Right ventricle myocardium inferior (tissue), 1 donor: ENCODE measurements at regions of chr19 and their contacts with region 1.

Region 1: DNA sequence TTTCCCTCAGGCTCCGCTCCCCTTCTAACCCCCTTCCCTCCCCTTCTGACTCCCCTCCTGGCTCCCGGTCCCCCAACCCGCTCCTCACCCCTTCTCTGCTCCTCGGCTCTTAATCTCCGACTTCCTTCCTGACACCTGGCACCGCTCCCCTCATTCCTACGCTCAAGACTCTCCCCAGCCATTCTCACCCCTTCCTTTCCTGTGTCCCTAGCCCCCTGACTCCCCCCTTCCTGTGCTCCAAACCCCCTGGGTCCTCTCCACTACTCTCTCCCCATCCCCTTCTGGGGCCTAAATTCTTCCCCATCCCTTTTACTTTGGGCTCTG is 658 bp downstream of the CLPP start:
- DNase-seq: no peak
- ATAC-seq: no peak

Region 2: DNA sequence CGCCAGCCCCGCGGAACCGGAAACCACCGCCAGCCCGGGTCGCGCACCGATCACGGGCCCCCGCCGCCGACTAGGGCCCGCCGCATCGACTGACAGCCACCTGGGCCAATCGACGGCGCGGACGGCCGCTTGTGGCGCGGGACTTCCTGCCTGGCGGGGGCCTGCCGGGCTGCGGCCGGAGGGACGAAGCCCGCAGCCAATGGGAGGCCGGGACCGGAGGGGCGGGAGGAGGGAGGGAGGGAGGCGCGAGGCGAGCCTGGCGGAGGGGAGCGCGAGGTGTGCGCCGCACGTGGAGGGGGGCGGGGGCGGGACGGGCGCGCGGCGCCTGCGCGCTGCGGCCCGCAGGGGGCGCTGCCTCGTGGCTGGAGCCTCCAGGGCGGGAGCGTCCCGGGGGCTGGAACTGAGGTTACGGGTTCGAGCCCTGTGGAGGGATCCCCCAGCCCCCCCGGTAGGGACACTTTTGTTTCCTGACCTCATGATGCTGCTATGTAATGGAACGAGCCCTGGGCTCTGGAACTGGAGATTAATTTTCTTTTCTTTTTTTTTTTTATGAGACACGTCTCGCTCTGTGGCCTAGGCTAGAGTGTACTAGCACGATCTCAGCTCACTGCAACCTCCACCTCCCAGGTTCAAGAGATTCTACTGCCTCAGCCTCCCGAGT is 81.9 kb before region 1 on chr19 and contains the start of gene MLLT1:
- intact Hi-C with region 1: no loop called
- DNase-seq: peak; percentile 98
- ATAC-seq: peak; percentile 98
- total RNA-seq, gene MLLT1: 40.1 TPM

Region 3: GRCh38 chr19:6378041-6378440 is 16.1 kb after region 1 on chr19:
- intact Hi-C with region 1: no loop called
- DNase-seq: no peak
- ATAC-seq: no peak

Region 4: DNA sequence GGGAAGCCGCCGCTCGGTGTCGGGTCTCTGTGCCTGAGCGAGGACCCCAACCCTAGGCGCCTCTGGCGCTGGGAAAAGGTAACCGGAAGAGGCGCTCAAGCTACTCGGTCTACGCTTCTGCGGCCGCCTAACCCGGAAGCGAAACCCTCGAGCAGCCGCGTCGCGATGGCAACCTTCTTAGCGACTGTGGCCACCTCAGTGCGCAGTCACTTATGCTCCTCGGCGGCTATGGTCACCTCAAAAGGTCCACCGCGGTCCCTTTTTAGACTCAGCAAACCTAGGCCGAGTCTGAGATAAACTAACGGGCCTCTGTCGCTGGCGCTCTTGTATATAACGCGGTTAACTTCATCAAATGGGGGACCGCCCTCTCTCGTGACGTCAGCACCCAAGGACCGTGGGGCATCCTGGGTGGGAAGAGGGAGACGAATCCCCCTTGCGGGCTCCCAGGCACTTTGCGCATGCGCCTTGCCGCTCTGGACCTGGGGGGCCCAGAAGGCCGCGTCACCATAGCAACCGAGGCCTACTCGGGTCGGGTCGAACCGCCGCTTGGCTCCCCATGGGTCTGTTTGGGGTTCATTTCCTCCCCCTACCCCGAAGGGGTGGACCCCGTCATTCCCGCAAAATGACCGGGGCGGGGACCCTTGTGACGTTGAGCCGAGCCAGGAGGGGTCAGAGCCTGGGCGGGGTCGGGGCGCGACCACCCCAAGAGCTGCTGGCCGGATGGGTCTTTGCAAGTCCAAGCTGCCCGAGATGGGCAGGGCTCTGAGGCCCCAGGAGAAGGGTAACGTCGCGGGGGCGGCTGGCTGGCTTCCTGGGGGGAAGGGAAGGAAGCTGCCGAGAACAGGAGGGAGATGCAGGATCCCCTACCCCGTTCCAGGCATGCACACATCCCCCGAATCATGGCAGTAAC is 31.3 kb after region 1 on chr19 and contains the start of gene GTF2F1:
- intact Hi-C with region 1: loop called (anchors 1 kb)
- DNase-seq: peak; percentile 97
- ATAC-seq: peak; percentile 95
- total RNA-seq, gene GTF2F1: 29.6 TPM